ENCODE measurements at regions of chr9 and their contacts with region 1.

Region 1: GRCh38 chr9:14347406-14348122 is 33.6 kb upstream of the NFIB start:
- DNase-seq: peak; percentile 87

Region 2: DNA sequence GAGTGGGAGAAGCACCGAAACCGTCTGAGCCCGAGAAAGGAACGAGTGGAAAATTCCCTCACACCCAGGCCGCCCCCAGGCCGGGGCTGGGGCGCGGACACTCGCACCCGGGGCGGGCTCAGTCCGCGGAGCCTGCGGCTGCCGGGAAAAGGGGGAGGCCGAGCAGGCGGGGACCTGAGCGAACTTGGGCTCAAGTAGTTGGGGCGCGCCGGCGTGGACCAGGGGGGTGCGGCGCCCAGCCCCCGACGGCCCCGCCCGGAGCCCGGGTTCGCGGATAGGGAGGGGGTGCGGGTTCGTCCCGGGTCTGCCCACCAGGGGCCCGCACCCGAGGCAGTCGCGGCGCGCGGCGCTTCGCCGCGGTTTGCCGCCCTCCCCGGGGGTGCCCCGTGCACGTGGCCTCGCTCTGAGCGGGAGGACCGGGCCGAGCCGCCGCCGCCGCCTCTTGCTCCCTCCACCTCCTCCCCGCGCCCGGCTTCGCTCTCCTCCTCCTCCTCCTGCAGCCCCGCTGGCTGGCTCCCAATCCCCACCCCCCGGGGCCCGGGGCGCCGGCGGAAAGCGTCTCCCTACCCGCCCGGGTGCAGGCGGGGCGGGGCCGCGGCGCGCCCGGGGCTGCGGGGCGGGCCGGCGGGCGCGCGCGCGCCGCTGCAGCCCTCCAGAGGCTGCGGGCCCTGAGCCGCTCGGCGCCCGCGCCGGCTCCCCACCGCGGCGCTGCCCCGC is 32.5 kb before region 1 on chr9:
- intact Hi-C with region 1: loop called (anchors 5 kb)
- DNase-seq: peak; percentile 97

Region 3: GRCh38 chr9:14322211-14323082 is 25.1 kb before region 1 on chr9:
- intact Hi-C with region 1: loop called in 1 of 2 experiments (anchors 2 kb)
- DNase-seq: peak; percentile 98

Measured in posterior vena cava (tissue), 2 donors.